Activated CD4-positive, alpha-beta memory T cell treated with anti-CD3 and anti-CD28 coated beads for 36 hours (primary cell): ENCODE measurements at regions of chr14 and their contacts with region 1.

Region 1: DNA sequence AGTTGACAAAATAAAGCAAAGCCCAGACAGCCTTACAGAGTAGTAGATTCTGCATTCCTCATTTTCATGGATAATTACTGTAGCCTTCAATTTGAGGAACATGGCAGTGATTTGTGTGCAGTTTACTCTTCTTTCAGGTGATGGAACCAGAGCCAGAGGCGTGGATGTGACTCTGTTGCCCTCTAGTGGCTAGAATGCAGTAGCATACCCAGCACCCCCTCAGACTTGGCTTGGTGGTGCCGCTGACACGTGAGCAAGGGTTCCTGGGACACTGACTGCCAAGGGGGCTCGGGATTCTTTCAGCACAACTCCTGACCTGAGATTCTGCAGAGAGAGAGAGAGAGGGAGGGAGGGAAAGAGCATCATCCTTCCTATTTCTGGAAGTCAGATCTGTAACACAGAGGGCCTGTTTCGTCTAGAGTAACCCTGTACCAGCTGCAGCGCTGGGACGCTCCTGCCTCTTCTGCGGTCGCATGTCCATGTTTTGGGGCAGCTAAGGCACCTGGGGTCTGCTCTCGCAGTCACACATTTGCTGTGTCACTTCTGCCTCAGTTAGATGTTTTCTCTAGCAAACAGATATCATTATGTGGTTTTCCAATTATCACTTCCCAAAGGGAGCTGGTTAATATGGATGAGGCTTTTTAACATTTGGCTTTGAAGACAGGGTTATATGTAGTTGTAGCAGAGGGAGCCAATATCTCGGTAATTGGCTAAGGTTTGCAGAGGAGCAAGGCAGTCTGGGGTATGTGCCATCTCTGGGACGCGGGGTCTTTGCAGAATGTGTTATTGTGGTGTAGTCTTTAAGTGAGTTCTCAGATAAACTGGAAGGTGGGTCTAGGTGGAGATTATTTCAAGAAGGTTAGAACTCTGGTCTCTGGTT is 428.1 kb downstream of the NRXN3 start:
- DNase-seq: peak; percentile 51
- H3K4me3 Mint-ChIP-seq: no peak overlapping the region
- H3K27ac Mint-ChIP-seq: no peak overlapping the region
- H3K4me1 Mint-ChIP-seq: no peaks in the 10 kb centered on the region
- H3K27me3 Mint-ChIP-seq: peaks cover 7% of the 10 kb centered on the region

Region 2: DNA sequence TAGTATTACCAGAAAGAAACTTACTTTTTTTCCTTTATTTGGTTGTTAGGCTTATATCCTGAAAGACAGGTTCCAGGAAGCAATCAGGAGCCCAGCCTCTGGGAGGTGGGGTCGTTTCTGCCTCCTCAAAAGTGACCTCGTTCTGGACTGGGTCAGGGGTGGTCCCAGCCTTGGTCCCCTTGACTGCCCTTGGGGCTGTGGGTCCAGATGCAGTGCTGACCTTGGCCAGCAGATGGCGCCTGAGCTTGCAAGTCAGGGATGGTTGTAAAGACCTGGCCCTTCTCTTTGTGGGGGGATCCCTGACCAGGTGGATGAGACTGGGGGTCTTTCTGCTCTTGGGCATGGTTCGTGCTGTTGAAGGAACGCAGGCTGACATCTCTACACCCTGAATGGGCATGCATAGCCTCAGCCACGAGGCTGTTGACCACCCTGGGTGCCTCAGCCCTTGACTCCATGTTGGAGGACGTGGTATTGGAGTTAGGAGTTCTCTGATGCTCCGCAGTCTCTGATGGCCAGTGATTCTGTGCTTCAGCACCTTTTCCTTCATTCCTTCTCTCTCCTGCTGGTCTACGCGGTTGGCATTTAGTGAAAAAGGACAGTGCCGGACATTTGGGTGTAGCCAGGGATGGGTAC is 736.0 kb before region 1 on chr14:
- CTCF ChIA-PET with region 1: interaction called, 35 read pairs
- POLR2A ChIA-PET with region 1: no interaction called
- intact Hi-C with region 1: loop called (anchors 1 kb)
- DNase-seq: peak; percentile 82
- H3K4me3 Mint-ChIP-seq: no peak overlapping the region
- H3K27ac Mint-ChIP-seq: no peak overlapping the region
- H3K4me1 Mint-ChIP-seq: no peaks in the 10 kb centered on the region
- H3K27me3 Mint-ChIP-seq: no peaks in the 10 kb centered on the region

Region 3: DNA sequence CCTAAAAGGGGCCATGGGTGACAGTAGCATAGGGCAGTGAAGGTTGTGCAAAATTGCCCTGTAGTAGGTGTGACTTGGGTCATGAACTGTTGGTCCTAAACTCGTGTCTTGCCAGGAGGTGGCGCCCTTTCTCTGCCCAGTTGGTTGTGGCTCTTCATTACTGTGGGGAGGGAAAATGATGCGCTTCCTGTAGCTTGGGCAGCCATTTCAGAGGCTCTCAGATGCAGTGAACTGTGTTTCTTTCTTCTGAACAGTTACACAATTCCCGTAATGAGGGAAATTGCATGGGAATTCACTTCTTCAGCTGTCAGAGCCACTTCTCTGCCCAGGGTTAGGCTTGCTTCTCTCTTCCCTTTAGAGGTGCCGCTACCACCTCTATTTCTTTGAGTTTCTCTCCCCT is 576.2 kb before region 1 on chr14:
- CTCF ChIA-PET with region 1: interaction called, 5 read pairs
- POLR2A ChIA-PET with region 1: no interaction called
- intact Hi-C with region 1: loop called (anchors 5 kb)
- DNase-seq: peak; percentile 76
- H3K4me3 Mint-ChIP-seq: no peak overlapping the region
- H3K27ac Mint-ChIP-seq: no peak overlapping the region
- H3K4me1 Mint-ChIP-seq: no peaks in the 10 kb centered on the region
- H3K27me3 Mint-ChIP-seq: peaks cover 4% of the 10 kb centered on the region

Region 4: DNA sequence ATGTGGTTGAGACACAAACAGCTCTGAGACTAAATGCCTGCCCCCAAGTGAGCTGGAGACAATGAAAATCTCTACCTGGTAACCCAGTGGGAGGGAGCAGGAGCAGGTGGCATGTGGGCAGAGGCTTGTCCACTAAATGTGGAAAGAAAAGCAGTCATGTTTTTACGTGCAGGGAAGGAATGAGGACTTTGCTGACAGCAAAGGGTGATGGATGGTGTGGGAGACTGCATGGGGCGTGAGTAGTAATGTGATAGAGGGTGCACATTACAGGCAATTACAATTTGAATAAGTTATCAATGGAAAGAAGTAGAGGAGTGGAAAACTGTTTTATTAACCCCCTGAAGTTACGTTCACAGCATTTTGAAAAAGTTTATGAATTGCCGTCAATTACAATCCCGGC is 251.5 kb before region 1 on chr14:
- CTCF ChIA-PET with region 1: no interaction called
- POLR2A ChIA-PET with region 1: no interaction called
- intact Hi-C with region 1: no loop called
- DNase-seq: no peak
- H3K4me3 Mint-ChIP-seq: no peak overlapping the region
- H3K27ac Mint-ChIP-seq: no peak overlapping the region
- H3K4me1 Mint-ChIP-seq: no peaks in the 10 kb centered on the region
- H3K27me3 Mint-ChIP-seq: no peaks in the 10 kb centered on the region

Region 5: GRCh38 chr14:78448164-78449094 is 149.9 kb before region 1 on chr14:
- CTCF ChIA-PET with region 1: no interaction called
- POLR2A ChIA-PET with region 1: no interaction called
- intact Hi-C with region 1: loop called (anchors 2 kb)
- DNase-seq: peak; percentile 51
- H3K4me3 Mint-ChIP-seq: no peak overlapping the region
- H3K27ac Mint-ChIP-seq: no peak overlapping the region
- H3K4me1 Mint-ChIP-seq: no peaks in the 10 kb centered on the region
- H3K27me3 Mint-ChIP-seq: peaks cover 2% of the 10 kb centered on the region

Region 6: DNA sequence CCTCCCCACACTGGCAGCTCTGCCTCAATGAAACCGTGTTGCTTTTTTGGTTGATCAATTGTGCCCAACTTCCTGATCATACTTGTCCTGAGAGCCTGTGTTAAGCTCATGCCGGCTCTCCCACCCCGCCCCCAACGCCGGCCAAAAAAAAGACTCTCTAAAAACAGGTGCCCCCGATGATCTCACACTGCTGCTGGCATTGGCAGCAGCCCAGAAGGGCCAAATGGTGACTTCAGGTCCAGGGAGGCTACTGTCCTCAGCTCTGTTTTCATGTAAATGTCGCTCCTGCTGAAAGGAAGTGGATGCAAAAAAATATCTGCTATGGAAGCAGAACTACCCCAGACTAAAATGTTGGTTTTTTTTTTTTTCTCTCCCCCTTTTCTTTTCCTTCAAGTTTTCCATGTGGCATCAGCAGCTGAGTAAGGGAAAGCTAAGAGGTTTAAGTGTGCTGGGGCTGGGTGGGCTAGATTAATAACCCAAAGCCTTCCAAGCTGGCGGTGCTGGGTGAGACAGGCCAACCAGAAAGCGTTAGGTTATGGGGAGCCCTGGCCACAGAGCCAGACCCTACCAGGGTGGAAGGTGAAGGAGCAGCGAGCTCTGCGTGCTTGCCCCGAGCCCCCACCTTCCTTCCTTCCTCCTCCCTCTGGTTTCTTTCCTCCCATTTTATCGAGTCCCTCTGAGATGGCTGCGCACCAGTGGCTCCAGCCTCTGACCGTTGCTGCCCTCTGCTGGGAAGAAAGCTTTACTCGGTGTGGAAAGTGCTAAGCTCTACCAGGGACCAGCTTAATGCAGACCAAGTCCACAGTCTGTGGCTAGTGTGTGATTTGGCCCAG is 32.0 kb before region 1 on chr14:
- CTCF ChIA-PET with region 1: interaction called, 10 read pairs
- POLR2A ChIA-PET with region 1: no interaction called
- intact Hi-C with region 1: no loop called
- DNase-seq: peak; percentile 75
- H3K4me3 Mint-ChIP-seq: no peak overlapping the region
- H3K27ac Mint-ChIP-seq: no peak overlapping the region
- H3K4me1 Mint-ChIP-seq: no peaks in the 10 kb centered on the region
- H3K27me3 Mint-ChIP-seq: no peaks in the 10 kb centered on the region